IMR-90 (cell line): ENCODE measurements at regions of chr5 and their contacts with region 1.

Region 1: DNA sequence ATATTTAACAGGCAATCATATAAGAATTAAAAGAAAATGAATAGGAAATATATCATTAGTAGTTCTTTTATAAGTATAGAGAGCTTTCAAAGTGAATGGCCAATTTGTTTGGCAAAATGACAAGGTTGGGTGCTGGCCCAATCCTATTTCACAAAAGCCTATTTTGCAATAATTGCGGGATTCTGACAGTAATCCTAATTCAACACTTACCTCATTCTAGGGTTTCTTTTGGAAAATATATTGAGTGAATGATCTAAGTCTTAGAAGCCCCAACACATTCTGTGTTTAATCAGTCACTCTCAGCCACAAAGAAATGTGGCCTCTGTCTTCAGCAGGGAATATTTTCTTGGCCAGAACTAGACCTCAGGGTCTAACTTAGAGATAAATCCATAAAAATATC is 835.9 kb upstream of the ZNF608 start:
- DNase-seq: no peak
- ATAC-seq: no peak
- H3K4me3 ChIP-seq: no peak overlapping the region
- H3K27ac ChIP-seq: no peak overlapping the region
- H3K4me1 ChIP-seq: peaks cover 1% of the 10 kb centered on the region; the same call in 1 of the 2 replicates
- H3K27me3 ChIP-seq: no peaks in the 10 kb centered on the region
- CTCF ChIP-seq: no peak
- POLR2A ChIP-seq: no peak
- RAD21 ChIP-seq: no peak

Region 2: GRCh38 chr5:125607018-125607417 is 24.7 kb after region 1 on chr5:
- CTCF ChIA-PET with region 1: no interaction called
- POLR2A ChIA-PET with region 1: no interaction called
- dilution Hi-C with region 1: no loop called
- in situ Hi-C with region 1: no loop called
- intact Hi-C with region 1: no loop called
- DNase-seq: peak; percentile 66
- ATAC-seq: peak; percentile 65
- H3K4me3 ChIP-seq: no peak overlapping the region
- H3K27ac ChIP-seq: no peak overlapping the region
- H3K4me1 ChIP-seq: no peaks in the 10 kb centered on the region
- H3K27me3 ChIP-seq: no peaks in the 10 kb centered on the region
- CTCF ChIP-seq: no peak
- POLR2A ChIP-seq: no peak
- RAD21 ChIP-seq: no peak

Region 3: GRCh38 chr5:126079266-126079665 is 496.9 kb after region 1 on chr5:
- CTCF ChIA-PET with region 1: no interaction called
- POLR2A ChIA-PET with region 1: no interaction called
- dilution Hi-C with region 1: no loop called
- in situ Hi-C with region 1: no loop called
- intact Hi-C with region 1: loop called (anchors 5 kb)
- DNase-seq: no peak
- ATAC-seq: no peak
- H3K4me3 ChIP-seq: no peak overlapping the region
- H3K27ac ChIP-seq: no peak overlapping the region
- H3K4me1 ChIP-seq: no peaks in the 10 kb centered on the region
- H3K27me3 ChIP-seq: no peaks in the 10 kb centered on the region
- CTCF ChIP-seq: no peak
- POLR2A ChIP-seq: no peak
- RAD21 ChIP-seq: no peak